H1 (cell line): ENCODE measurements at regions of chr7 and their contacts with region 1.

Region 1: DNA sequence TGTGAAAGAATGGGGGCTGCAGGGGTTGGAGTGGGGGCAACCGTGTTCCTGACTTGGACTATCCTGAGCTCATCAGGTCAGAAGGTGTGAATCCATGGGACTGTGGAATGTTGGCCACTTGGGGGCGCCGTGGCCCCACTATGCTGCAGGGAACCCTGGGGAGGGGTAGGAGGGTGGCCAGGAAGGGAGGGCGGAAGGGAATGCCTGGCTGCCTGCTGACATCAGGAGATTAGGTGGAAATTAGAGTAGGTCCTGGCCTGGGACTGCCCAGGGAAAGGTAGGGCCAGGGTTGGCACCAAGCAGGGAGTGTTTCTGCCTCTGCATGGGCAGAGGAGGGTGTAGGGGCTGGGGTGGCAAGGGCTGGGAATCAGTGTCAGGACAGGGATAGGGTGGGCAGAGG is 65.8 kb upstream of the PRSS58 start:
- DNase-seq: peak; percentile 50 to 90
- H3K4me3 ChIP-seq: no peak overlapping the region
- H3K27ac ChIP-seq: no peak overlapping the region
- H3K4me1 ChIP-seq: peaks cover 0 to 6% (median 1%) of the 10 kb centered on the region in 4 experiments; a peak in 4 of 7 replicates
- H3K27me3 ChIP-seq: no peaks in the 10 kb centered on the region
- CTCF ChIP-seq: peak; percentile 81 to 92 (median 87)
- EP300 ChIP-seq: 0 out of 3 replicates have a peak, but pooled peaks of 1 of the 2 experiments have one; percentile 24
- POLR2A ChIP-seq: no peak
- RAD21 ChIP-seq: peak; percentile 81 to 88

Region 2: DNA sequence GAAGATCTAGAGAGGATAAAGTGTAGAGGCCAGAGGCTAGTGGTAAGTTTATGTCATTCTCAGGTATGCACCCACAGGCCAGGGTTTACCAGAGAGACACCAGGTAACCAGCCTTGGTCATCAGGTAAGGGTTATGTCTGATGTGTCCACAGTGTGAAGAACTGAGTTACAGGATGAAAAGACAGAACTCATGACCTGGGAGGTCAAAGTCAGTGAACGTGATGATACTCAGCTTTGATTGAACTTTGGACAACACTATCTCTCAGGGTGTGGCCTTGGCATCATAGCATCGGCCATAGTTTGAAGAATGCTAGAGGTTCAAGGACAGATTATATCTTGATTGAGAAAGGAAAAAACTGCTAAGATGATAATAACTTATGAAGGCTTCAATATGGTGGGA is 290.6 kb before region 1 on chr7:
- CTCF ChIA-PET with region 1: no interaction called
- POLR2A ChIA-PET with region 1: no interaction called
- DNase-seq: no peak
- H3K4me3 ChIP-seq: no peak overlapping the region
- H3K27ac ChIP-seq: no peak overlapping the region
- H3K4me1 ChIP-seq: no peaks in the 10 kb centered on the region
- H3K27me3 ChIP-seq: no peaks in the 10 kb centered on the region
- CTCF ChIP-seq: no peak
- EP300 ChIP-seq: no peak
- POLR2A ChIP-seq: no peak
- RAD21 ChIP-seq: no peak

Region 3: GRCh38 chr7:142231716-142232115 is 92.0 kb before region 1 on chr7:
- CTCF ChIA-PET with region 1: interaction called, 11 read pairs
- POLR2A ChIA-PET with region 1: no interaction called
- DNase-seq: peak; percentile 29 to 69
- H3K4me3 ChIP-seq: no peak overlapping the region
- H3K27ac ChIP-seq: no peak overlapping the region
- H3K4me1 ChIP-seq: peaks cover 0 to 2% (median under 1%) of the 10 kb centered on the region in 4 experiments; a peak in 1 of 7 replicates
- H3K27me3 ChIP-seq: no peaks in the 10 kb centered on the region
- CTCF ChIP-seq: peak; percentile 63 to 75 (median 68)
- EP300 ChIP-seq: no peak
- POLR2A ChIP-seq: no peak
- RAD21 ChIP-seq: peak; percentile 31 to 51; a peak in 3 of 4 replicates

Region 4: DNA sequence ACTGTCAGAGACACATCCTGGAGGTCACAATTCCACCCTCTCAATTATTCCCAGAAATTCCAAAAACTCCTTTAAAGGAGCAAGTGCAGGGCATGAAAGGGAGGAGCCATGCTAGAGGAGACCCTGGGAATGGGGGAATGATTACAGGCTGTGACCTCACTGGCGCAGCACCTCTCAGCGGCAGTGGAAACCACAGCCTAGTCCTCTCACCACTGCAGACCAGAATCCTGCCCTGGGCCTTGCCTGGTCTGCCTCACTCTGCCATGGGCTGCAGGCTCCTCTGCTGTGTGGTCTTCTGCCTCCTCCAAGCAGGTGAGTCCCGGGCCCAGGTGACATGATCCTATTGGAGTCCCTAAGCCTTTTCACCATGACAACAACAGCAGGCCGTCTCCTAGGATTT is 15.4 kb before region 1 on chr7:
- CTCF ChIA-PET with region 1: interaction called, 302 read pairs
- POLR2A ChIA-PET with region 1: no interaction called
- DNase-seq: no peak
- H3K4me3 ChIP-seq: no peak overlapping the region
- H3K27ac ChIP-seq: no peak overlapping the region
- H3K4me1 ChIP-seq: no peaks in the 10 kb centered on the region
- H3K27me3 ChIP-seq: no peaks in the 10 kb centered on the region
- CTCF ChIP-seq: no peak
- EP300 ChIP-seq: no peak
- POLR2A ChIP-seq: no peak
- RAD21 ChIP-seq: no peak

Region 5: GRCh38 chr7:142313528-142313927 is 10.2 kb before region 1 on chr7:
- CTCF ChIA-PET with region 1: interaction called, 302 read pairs
- POLR2A ChIA-PET with region 1: no interaction called
- DNase-seq: no peak
- H3K4me3 ChIP-seq: no peak overlapping the region
- H3K27ac ChIP-seq: no peak overlapping the region
- H3K4me1 ChIP-seq: no peaks in the 10 kb centered on the region
- H3K27me3 ChIP-seq: peaks cover 0 to 1% (median 0%) of the 10 kb centered on the region in 4 experiments; a peak in 1 of 7 replicates
- CTCF ChIP-seq: no peak
- EP300 ChIP-seq: no peak
- POLR2A ChIP-seq: no peak
- RAD21 ChIP-seq: no peak

Region 6: DNA sequence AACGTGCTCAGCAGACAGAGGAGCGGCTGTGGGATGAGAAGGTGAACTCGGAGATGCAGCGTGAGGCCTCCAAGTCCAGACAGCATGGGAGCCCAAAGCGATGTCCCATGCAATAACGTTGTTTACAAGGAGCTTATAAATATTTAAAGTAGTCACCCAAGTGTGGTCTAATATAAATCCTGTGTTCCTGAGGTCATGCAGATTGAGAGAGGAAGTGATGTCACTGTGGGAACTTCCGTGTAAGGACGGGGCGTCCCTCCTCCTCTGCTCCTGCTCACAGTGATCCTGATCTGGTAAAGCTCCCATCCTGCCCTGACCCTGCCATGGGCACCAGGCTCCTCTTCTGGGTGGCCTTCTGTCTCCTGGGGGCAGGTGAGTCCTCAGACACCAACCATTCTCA is 28.8 kb after region 1 on chr7:
- CTCF ChIA-PET with region 1: interaction called, 10 read pairs
- POLR2A ChIA-PET with region 1: interaction called, 3 read pairs
- DNase-seq: no peak
- H3K4me3 ChIP-seq: no peak overlapping the region
- H3K27ac ChIP-seq: no peak overlapping the region
- H3K4me1 ChIP-seq: no peaks in the 10 kb centered on the region
- H3K27me3 ChIP-seq: no peaks in the 10 kb centered on the region
- CTCF ChIP-seq: no peak
- EP300 ChIP-seq: no peak
- POLR2A ChIP-seq: no peak
- RAD21 ChIP-seq: no peak